ENCODE measurements at regions of chr4 and their contacts with region 1.

Region 1: GRCh38 chr4:159946983-159947615 is 844.2 kb downstream of the RAPGEF2 start:
- DNase-seq: peak; percentile 82
- H3K4me3 ChIP-seq: no peak overlapping the region
- H3K27ac ChIP-seq: no peak overlapping the region
- H3K4me1 ChIP-seq: peaks cover 20% of the 10 kb centered on the region
- H3K27me3 ChIP-seq: no peaks in the 10 kb centered on the region
- CTCF ChIP-seq: peak; percentile 84

Region 2: DNA sequence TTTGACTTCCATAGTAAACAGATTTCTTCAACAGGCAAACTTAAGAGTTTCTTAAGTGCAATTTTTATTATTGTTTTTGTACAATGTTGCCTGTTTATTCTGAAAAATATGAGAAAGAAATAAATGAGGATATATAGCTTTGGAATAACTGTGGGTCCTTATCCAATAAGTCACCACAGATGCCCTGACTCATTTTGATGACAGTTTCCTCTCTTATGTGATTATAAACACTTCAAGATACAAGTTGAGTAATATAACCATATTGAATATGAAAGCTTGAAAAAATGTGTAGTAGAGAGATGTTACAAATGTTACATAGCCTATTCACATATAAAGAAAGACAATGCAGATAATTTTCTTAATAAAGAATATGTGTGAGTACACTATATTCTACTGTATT is 87.4 kb after region 1 on chr4:
- CTCF ChIA-PET with region 1: no interaction called
- POLR2A ChIA-PET with region 1: no interaction called
- intact Hi-C with region 1: no loop called
- DNase-seq: no peak
- H3K4me3 ChIP-seq: no peak overlapping the region
- H3K27ac ChIP-seq: no peak overlapping the region
- H3K4me1 ChIP-seq: peaks cover 3% of the 10 kb centered on the region
- H3K27me3 ChIP-seq: no peaks in the 10 kb centered on the region
- CTCF ChIP-seq: no peak

Region 3: DNA sequence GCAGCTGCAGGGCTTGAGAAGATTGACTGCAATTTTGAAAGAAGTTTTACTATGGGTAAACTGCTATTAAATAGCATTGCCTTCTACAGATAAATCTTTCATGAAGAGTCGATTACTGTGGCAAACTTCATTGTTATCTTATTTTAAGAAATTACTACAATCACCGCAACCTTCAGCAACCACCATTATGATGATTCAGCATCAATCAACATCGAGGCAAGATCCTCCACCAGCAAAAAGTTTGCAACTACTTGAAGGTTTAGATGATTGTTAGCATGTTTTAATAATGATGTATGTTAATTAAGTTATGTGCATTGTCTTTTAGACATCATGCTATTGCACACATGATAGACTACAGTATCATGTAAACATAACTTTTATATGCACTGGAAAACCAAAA is 705.7 kb after region 1 on chr4:
- CTCF ChIA-PET with region 1: no interaction called
- POLR2A ChIA-PET with region 1: no interaction called
- intact Hi-C with region 1: loop called (anchors 5 kb)
- DNase-seq: no peak
- H3K4me3 ChIP-seq: no peak overlapping the region
- H3K27ac ChIP-seq: no peak overlapping the region
- H3K4me1 ChIP-seq: no peaks in the 10 kb centered on the region
- H3K27me3 ChIP-seq: no peaks in the 10 kb centered on the region
- CTCF ChIP-seq: no peak

Measured in A673 (cell line).